Gastrocnemius medialis (tissue), 4 donors: ENCODE measurements at regions of chr2 and their contacts with region 1.

Region 1: GRCh38 chr2:135494503-135494902 is 36.5 kb downstream of the ZRANB3 start:
- DNase-seq: peak in 1 of 2 donors; percentile 20
- ATAC-seq: peak; percentile 97 to 99
- H3K4me3 ChIP-seq: no peak overlapping the region
- H3K27ac ChIP-seq: peak overlapping the region; percentile 80 to 89 (median 85)
- H3K4me1 ChIP-seq: peaks cover 10 to 26% of the 10 kb centered on the region in 2 donors
- H3K27me3 ChIP-seq: no peaks in the 10 kb centered on the region
- CTCF ChIP-seq: no peak
- POLR2A ChIP-seq: no peak

Region 2: DNA sequence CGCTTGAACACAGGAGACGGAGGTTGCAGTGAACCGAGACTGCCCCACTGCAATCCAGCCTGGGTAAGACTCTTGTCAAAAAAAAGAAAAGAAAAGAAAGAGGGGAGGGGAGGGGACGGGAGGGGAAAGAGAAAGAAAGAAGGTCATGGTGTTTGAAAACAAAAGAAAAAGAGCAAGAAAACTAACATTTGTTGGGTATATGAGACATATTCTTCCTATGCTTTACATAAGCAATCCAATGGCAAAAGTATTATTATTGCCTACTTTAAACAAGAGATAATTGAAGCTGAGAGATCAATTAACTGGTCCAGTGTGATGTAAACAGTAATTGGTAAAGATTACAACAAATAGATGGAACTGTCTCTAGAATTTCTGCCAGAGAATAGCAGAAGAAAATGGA is 120.8 kb before region 1 on chr2:
- in situ Hi-C with region 1: no loop called
- intact Hi-C with region 1: no loop called
- DNase-seq: no peak
- ATAC-seq: no peak
- H3K4me3 ChIP-seq: no peak overlapping the region
- H3K27ac ChIP-seq: no peak overlapping the region
- H3K4me1 ChIP-seq: no peaks in the 10 kb centered on the region
- H3K27me3 ChIP-seq: no peaks in the 10 kb centered on the region
- CTCF ChIP-seq: no peak
- POLR2A ChIP-seq: no peak

Region 3: GRCh38 chr2:135600915-135601314 is 106.4 kb after region 1 on chr2:
- in situ Hi-C with region 1: loop called in 1 of 4 experiments (anchors 25 kb)
- intact Hi-C with region 1: no loop called
- DNase-seq: no peak
- ATAC-seq: no peak
- H3K4me3 ChIP-seq: no peak overlapping the region
- H3K27ac ChIP-seq: no peak overlapping the region
- H3K4me1 ChIP-seq: peaks cover 0 to 6% of the 10 kb centered on the region in 2 donors
- H3K27me3 ChIP-seq: no peaks in the 10 kb centered on the region
- CTCF ChIP-seq: peak in 1 of 5 experiments; percentile 35
- POLR2A ChIP-seq: no peak